B cell (primary cell): ENCODE measurements at regions of chr2 and their contacts with region 1.

Region 1: DNA sequence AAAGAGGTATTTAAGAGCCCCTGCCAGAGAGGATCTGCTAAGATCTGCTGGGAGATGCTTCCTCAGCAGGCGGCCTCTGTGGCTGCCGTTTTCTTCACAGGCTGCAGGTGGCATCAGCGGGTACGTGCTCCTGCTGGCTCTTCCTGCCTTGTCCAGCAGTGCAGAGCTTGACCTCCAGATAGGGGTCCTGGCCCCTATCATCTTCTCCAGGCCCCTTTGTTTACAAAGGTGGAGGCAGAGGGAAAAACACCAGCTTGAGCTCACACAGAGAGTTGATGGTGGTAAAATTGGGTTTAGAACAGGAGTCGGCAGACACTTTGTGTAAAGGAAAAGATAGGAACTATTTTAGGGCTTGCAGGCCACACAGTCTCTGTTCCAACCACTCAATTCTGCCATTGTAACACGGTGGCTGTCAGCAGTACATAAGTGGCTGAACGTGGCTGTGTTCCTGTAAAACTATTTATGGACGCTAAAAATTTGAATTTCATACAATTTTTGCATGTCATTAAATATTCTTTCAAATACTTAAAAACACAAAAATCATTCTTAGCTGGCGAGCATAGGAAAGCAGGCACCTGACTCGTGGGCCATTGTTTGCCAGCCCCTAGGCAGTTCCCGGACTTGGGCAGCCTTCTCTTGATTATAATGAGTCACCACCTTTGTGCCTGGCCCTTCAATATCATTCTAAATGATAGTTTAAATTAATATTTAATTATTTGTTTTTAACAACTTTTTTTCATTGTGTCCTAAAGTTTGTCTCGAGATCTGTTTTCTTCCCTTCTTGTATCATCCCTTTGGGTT is 98.2 kb upstream of the B3GNT7 start:
- DNase-seq: peak; percentile 68
- ATAC-seq: peak; percentile 62
- H3K4me3 ChIP-seq: no peak overlapping the region
- H3K4me3 Mint-ChIP-seq: no peak overlapping the region
- H3K27ac ChIP-seq: no peak overlapping the region
- H3K27ac Mint-ChIP-seq: no peak overlapping the region
- H3K4me1 ChIP-seq: peaks cover 30 to 56% of the 10 kb centered on the region in 2 donors
- H3K4me1 Mint-ChIP-seq: peaks cover 56% of the 10 kb centered on the region
- H3K27me3 ChIP-seq: no peaks in the 10 kb centered on the region
- H3K27me3 Mint-ChIP-seq: no peaks in the 10 kb centered on the region
- CTCF ChIP-seq: peak; percentile 76

Region 2: DNA sequence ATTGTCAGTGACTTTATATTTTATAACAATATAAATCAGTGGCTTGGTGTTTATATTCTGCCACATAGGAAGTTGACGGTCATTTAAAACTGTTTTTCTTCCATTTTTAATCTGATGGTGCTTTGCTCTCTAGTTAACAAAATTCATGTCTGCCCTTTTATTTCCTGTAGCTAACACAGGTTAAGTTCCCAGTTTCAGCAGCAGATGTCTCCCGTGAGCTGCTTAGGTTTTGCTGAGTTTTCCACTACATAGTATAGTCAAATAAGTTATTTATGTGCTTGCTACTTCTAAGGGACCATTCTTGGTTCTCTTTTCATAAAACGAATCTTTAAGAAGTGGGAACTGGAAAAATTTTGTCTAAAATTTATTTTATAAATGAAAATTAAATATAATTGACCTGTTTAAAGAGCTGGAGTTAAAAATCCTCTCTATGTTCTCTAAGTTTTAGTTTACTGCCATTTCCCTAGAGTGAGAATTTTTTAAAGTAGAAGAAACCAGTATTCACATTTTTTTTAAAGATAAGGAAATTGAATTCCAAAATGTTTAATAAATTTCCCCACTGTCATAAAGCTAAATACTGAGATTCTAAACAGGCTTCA is 193.1 kb before region 1 on chr2:
- CTCF ChIA-PET with region 1: interaction called, 4 read pairs
- POLR2A ChIA-PET with region 1: no interaction called
- intact Hi-C with region 1: loop called (anchors 10 kb)
- DNase-seq: peak; percentile 73
- ATAC-seq: peak; percentile 69
- H3K4me3 ChIP-seq: no peak overlapping the region
- H3K4me3 Mint-ChIP-seq: no peak overlapping the region
- H3K27ac ChIP-seq: no peak overlapping the region
- H3K27ac Mint-ChIP-seq: no peak overlapping the region
- H3K4me1 ChIP-seq: no peaks in the 10 kb centered on the region
- H3K4me1 Mint-ChIP-seq: no peaks in the 10 kb centered on the region
- H3K27me3 ChIP-seq: no peaks in the 10 kb centered on the region
- H3K27me3 Mint-ChIP-seq: no peaks in the 10 kb centered on the region
- CTCF ChIP-seq: peak; percentile 87

Region 3: GRCh38 chr2:231200805-231201474 is 96.4 kb before region 1 on chr2:
- CTCF ChIA-PET with region 1: no interaction called
- POLR2A ChIA-PET with region 1: no interaction called
- intact Hi-C with region 1: no loop called
- DNase-seq: no peak
- ATAC-seq: no peak
- H3K4me3 ChIP-seq: no peak overlapping the region
- H3K4me3 Mint-ChIP-seq: no peak overlapping the region
- H3K27ac ChIP-seq: no peak overlapping the region
- H3K27ac Mint-ChIP-seq: no peak overlapping the region
- H3K4me1 ChIP-seq: peaks cover 8 to 12% of the 10 kb centered on the region in 2 donors
- H3K4me1 Mint-ChIP-seq: peaks cover 10% of the 10 kb centered on the region
- H3K27me3 ChIP-seq: peaks cover 0 to 2% (median 0%) of the 10 kb centered on the region in 4 experiments
- H3K27me3 Mint-ChIP-seq: peaks cover 7% of the 10 kb centered on the region
- CTCF ChIP-seq: no peak

Region 4: GRCh38 chr2:231280846-231281245 is 16.5 kb before region 1 on chr2:
- CTCF ChIA-PET with region 1: interaction called, 18 read pairs
- POLR2A ChIA-PET with region 1: no interaction called
- intact Hi-C with region 1: no loop called
- DNase-seq: peak; percentile 28
- ATAC-seq: peak; percentile 21
- H3K4me3 ChIP-seq: no peak overlapping the region
- H3K4me3 Mint-ChIP-seq: peak overlapping the region; percentile 20
- H3K27ac ChIP-seq: no peak overlapping the region
- H3K27ac Mint-ChIP-seq: no peak overlapping the region
- H3K4me1 ChIP-seq: peaks cover 6 to 8% of the 10 kb centered on the region in 2 donors
- H3K4me1 Mint-ChIP-seq: peaks cover 12% of the 10 kb centered on the region
- H3K27me3 ChIP-seq: no peaks in the 10 kb centered on the region
- H3K27me3 Mint-ChIP-seq: peaks cover 3% of the 10 kb centered on the region
- CTCF ChIP-seq: no peak

Region 5: GRCh38 chr2:231399853-231400680 is 102.8 kb after region 1 on chr2:
- CTCF ChIA-PET with region 1: interaction called, 149 read pairs
- POLR2A ChIA-PET with region 1: no interaction called
- intact Hi-C with region 1: loop called (anchors 1 kb)
- DNase-seq: no peak
- ATAC-seq: no peak
- H3K4me3 ChIP-seq: no peak overlapping the region
- H3K4me3 Mint-ChIP-seq: no peak overlapping the region
- H3K27ac ChIP-seq: no peak overlapping the region
- H3K27ac Mint-ChIP-seq: peak overlapping the region; percentile 56
- H3K4me1 ChIP-seq: peaks cover 7 to 13% of the 10 kb centered on the region in 2 donors
- H3K4me1 Mint-ChIP-seq: peaks cover 27% of the 10 kb centered on the region
- H3K27me3 ChIP-seq: no peaks in the 10 kb centered on the region
- H3K27me3 Mint-ChIP-seq: no peaks in the 10 kb centered on the region
- CTCF ChIP-seq: no peak

Region 6: DNA sequence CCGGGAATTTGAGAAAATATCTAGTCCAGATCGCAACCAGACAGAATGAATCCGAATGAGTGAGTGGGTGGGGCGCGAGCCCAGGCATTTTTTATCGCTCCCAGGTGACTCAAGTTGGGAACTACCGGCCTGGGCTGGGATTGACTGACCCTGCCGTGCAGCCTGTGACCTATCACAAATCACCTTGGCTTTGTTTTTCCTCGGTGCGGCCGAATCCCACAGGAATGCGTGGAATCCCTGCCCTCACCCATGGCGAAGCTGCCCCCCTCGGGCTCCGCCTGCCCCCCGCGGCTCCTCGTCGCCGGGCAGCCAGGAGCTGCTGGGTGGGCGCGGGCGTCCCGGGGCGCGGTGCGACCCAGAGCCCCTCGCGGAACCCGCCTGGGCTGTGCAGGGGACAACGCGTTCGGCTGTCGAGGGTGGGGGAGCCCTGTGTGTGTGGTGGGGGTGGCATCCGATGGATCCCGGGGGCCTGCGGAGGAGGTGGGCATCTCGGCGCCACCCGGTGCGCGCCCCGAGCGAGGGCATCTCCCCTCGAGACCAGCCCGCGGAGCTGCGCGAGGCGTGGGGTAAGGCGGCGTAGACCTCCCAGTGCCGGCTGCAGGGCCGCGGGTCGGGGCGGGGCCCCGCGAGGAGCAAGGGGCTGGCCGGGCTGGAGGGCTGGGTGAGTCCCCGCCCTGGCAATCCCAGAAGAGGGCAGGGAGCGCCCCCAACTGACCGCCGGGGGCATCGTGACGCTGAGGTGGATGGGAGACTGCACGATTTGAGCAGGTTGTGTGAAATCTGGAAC is 114.7 kb after region 1 on chr2:
- CTCF ChIA-PET with region 1: interaction called, 149 read pairs
- POLR2A ChIA-PET with region 1: no interaction called
- intact Hi-C with region 1: loop called (anchors 1 kb)
- DNase-seq: peak; percentile 88
- ATAC-seq: peak; percentile 100
- H3K4me3 ChIP-seq: peak overlapping the region in 4 of 5 experiments; percentile 10 to 62 (median 52)
- H3K4me3 Mint-ChIP-seq: peak overlapping the region; percentile 80
- H3K27ac ChIP-seq: no peak overlapping the region
- H3K27ac Mint-ChIP-seq: no peak overlapping the region
- H3K4me1 ChIP-seq: peaks cover 12 to 13% of the 10 kb centered on the region in 2 donors
- H3K4me1 Mint-ChIP-seq: peaks cover 7% of the 10 kb centered on the region
- H3K27me3 ChIP-seq: peaks cover 0 to 24% (median 10%) of the 10 kb centered on the region in 4 experiments
- H3K27me3 Mint-ChIP-seq: peaks cover 21% of the 10 kb centered on the region
- CTCF ChIP-seq: peak; percentile 87